Aorta (tissue), 5 donors: ENCODE measurements at regions of chr17 and their contacts with region 1.

Region 1: DNA sequence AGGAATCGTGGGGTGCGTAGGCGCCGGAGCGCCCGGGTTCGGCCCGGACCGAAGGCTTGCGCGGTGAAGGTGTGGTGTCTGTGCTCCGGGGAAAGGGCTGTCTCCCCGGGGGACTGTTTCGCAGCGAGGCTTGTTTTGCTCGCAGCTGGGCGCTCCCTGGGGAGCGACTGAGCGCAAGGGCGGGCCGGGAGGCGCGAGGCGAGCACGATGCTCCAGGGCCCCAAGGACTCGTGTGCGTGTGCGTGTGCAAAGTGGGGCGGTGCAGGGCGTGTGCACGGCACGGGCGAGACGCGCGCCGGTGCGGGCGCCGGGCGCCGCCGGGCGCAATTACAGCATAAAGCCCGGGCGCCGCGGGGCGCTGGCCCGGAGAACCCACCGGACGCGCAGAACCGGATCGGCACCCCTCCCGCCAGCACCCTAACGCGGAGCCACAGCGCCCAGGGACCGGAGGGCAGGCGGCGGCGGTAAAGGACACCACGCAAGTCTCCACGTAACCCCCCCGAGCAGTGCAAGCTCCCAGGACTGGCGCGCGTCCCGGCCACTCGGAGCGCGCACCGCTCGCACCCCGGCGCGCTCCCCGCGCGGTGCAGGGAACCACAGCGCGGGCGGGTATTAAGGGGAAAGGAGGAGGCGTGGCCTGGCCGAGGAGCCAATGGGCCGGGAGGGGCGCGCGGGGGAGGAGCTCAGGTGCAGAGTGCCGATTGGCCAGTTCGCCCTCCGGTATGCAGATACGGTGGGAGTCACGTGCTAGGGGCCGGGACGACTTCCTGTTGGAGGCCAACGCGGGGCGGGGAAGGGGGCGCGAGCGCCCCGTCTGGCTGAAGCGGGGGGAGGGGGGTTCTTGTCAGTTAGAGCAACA is at the start of gene TNRC6C:
- DNase-seq: peak; percentile 100
- ATAC-seq: peak; percentile 99
- H3K4me3 ChIP-seq: peak within 1 kb of the TSS; percentile 98 to 99
- H3K27ac ChIP-seq: peak within 1 kb of the TSS; percentile 91 to 95
- H3K4me1 ChIP-seq: peaks cover 2 to 9% of the 10 kb centered on the region in 2 donors
- H3K27me3 ChIP-seq: no peaks in the 10 kb centered on the region
- total RNA-seq, gene TNRC6C: 45.7 to 62.2 TPM

Region 2: DNA sequence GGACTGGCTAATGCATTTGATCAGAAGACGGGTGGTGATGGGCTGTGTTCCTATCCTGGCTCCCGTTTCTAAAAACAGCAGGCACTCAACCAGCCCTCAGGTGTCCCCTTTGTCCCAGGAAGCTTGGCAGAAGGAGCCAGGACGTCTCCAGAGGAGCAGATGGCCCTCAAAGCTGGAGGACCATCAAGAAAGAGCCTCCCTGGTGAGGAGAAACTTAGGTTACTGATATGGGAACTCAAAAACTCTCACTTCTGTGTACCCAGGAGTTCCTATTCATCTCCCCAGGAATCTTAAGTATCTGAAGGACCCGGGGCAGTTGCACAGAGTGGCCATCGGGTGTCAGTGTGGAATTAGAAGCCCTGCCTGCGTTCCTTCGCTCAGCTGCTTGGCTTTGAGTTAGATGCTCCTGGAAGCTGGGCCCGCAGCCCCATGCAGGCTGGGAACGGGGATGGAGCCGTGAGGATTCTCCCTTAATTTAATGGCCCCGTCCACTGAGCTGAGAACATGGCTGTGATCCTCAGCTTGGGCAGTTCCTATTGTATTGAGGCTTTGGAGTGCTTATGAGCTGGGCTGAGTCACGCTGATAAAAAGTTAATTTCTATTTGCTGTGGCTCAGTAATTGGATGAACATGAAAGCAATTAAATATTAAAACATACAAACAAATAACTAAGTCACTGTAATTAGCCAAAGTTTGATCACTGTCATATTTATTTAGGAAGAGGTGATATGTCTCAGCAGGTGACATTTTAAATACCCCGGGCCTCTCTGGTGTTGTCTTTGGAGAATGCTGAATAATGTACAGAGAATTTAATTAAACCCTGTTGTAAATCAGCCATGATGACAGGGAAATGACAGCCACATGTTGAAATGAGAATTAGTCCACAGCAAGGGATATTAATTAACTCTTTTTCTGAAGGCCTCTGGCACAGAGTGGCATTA is 415.3 kb before region 1 on chr17:
- intact Hi-C with region 1: loop called in 1 of 2 experiments (anchors 5 kb)
- DNase-seq: peak; percentile 89
- ATAC-seq: peak; percentile 94
- H3K4me3 ChIP-seq: no peak overlapping the region
- H3K27ac ChIP-seq: no peak overlapping the region
- H3K4me1 ChIP-seq: no peaks in the 10 kb centered on the region
- H3K27me3 ChIP-seq: no peaks in the 10 kb centered on the region

Region 3: GRCh38 chr17:77924757-77925336 is 33.2 kb before region 1 on chr17:
- intact Hi-C with region 1: no loop called
- DNase-seq: peak; percentile 80 to 83
- ATAC-seq: peak; percentile 72
- H3K4me3 ChIP-seq: no peak overlapping the region
- H3K27ac ChIP-seq: no peak overlapping the region
- H3K4me1 ChIP-seq: no peaks in the 10 kb centered on the region
- H3K27me3 ChIP-seq: no peaks in the 10 kb centered on the region